PC-9 (cell line): ENCODE measurements at regions of chr4 and their contacts with region 1.

Region 1: GRCh38 chr4:86497980-86498862 is 95.9 kb upstream of the PTPN13 start:
- DNase-seq: peak in 1 of 2 experiments; percentile 58
- H3K4me3 ChIP-seq: no peak overlapping the region
- H3K27ac ChIP-seq: no peak overlapping the region
- H3K4me1 ChIP-seq: peaks cover 40% of the 10 kb centered on the region
- H3K27me3 ChIP-seq: no peaks in the 10 kb centered on the region
- CTCF ChIP-seq: peak; percentile 79

Region 2: GRCh38 chr4:85979276-85979675 is 518.9 kb before region 1 on chr4:
- CTCF ChIA-PET with region 1: no interaction called
- POLR2A ChIA-PET with region 1: no interaction called
- intact Hi-C with region 1: no loop called
- DNase-seq: no peak
- H3K4me3 ChIP-seq: no peak overlapping the region
- H3K27ac ChIP-seq: no peak overlapping the region
- H3K4me1 ChIP-seq: no peaks in the 10 kb centered on the region
- H3K27me3 ChIP-seq: no peaks in the 10 kb centered on the region
- CTCF ChIP-seq: no peak

Region 3: DNA sequence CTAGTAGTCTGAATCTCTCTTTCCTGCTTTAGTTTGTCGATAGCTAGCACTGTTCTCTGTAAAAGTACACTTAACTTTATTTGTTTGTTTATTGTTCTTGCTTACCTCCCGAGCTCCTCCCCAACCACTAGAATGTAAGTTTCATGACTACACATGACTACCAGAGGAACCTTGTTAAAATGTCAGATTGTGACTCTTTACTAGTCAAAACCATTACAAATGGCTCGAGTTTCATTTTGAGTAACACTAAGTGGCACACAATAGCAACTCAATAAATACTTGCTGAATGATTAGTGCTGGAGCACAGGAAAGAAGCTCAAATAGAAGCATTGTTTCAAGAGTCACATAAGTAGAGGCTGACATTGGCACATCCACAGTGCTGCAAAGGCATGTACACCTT is 254.5 kb before region 1 on chr4:
- CTCF ChIA-PET with region 1: interaction called, 12 read pairs
- POLR2A ChIA-PET with region 1: no interaction called
- intact Hi-C with region 1: no loop called
- DNase-seq: no peak
- H3K4me3 ChIP-seq: no peak overlapping the region
- H3K27ac ChIP-seq: no peak overlapping the region
- H3K4me1 ChIP-seq: no peaks in the 10 kb centered on the region
- H3K27me3 ChIP-seq: no peaks in the 10 kb centered on the region
- CTCF ChIP-seq: no peak

Region 4: GRCh38 chr4:86294883-86295282 is 203.3 kb before region 1 on chr4:
- CTCF ChIA-PET with region 1: no interaction called
- POLR2A ChIA-PET with region 1: no interaction called
- intact Hi-C with region 1: no loop called
- DNase-seq: no peak
- H3K4me3 ChIP-seq: no peak overlapping the region
- H3K27ac ChIP-seq: no peak overlapping the region
- H3K4me1 ChIP-seq: no peaks in the 10 kb centered on the region
- H3K27me3 ChIP-seq: no peaks in the 10 kb centered on the region
- CTCF ChIP-seq: no peak

Region 5: GRCh38 chr4:86338989-86339388 is 159.2 kb before region 1 on chr4:
- CTCF ChIA-PET with region 1: no interaction called
- POLR2A ChIA-PET with region 1: no interaction called
- intact Hi-C with region 1: loop called (anchors 1 kb)
- DNase-seq: peak; percentile 47 to 80
- H3K4me3 ChIP-seq: no peak overlapping the region
- H3K27ac ChIP-seq: peak overlapping the region; percentile 66
- H3K4me1 ChIP-seq: peaks cover 12% of the 10 kb centered on the region
- H3K27me3 ChIP-seq: no peaks in the 10 kb centered on the region
- CTCF ChIP-seq: no peak

Region 6: GRCh38 chr4:87235020-87235671 is 736.9 kb after region 1 on chr4:
- CTCF ChIA-PET with region 1: no interaction called
- POLR2A ChIA-PET with region 1: no interaction called
- intact Hi-C with region 1: loop called (anchors 5 kb)
- DNase-seq: no peak
- H3K4me3 ChIP-seq: peak overlapping the region; percentile 75; the same call in 1 of the 2 replicates
- H3K27ac ChIP-seq: no peak overlapping the region
- H3K4me1 ChIP-seq: peaks cover 5% of the 10 kb centered on the region
- H3K27me3 ChIP-seq: no peaks in the 10 kb centered on the region
- CTCF ChIP-seq: no peak

Region 7: DNA sequence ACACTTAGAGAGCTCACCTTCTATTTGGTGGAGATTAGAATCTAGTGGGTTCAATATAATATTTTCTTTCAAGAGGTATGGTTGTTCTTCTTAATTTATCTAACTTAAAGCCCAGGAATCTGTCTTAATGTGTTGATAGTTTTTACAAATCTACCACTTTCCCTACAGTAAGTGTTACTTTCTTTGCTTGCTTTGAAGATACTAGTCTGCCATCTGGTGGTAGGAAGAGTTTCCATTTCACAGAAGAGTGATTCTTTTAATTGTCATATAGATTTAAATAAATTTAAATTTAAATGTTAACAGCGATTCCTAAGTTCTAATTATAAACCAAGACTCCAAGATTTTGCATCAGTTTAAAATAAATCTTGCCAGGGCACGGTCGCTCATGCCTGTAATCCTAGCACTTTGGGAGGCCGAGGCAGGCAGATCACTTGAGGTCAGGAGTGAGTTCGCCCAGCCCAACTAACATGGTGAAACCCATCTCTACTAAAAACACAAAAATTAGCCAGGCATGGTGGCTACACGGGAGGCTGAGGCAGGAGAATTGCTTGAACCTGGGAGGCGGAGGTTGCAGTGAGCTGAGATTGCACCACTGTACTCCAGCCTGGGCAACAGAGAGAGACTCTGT is 967.6 kb after region 1 on chr4:
- CTCF ChIA-PET with region 1: no interaction called
- POLR2A ChIA-PET with region 1: no interaction called
- intact Hi-C with region 1: loop called (anchors 5 kb)
- DNase-seq: no peak
- H3K4me3 ChIP-seq: no peak overlapping the region
- H3K27ac ChIP-seq: no peak overlapping the region
- H3K4me1 ChIP-seq: 0 out of 2 replicates have a peak, but pooled peaks cover 1% of the 10 kb centered on the region
- H3K27me3 ChIP-seq: no peaks in the 10 kb centered on the region
- CTCF ChIP-seq: peak; percentile 72

Region 8: DNA sequence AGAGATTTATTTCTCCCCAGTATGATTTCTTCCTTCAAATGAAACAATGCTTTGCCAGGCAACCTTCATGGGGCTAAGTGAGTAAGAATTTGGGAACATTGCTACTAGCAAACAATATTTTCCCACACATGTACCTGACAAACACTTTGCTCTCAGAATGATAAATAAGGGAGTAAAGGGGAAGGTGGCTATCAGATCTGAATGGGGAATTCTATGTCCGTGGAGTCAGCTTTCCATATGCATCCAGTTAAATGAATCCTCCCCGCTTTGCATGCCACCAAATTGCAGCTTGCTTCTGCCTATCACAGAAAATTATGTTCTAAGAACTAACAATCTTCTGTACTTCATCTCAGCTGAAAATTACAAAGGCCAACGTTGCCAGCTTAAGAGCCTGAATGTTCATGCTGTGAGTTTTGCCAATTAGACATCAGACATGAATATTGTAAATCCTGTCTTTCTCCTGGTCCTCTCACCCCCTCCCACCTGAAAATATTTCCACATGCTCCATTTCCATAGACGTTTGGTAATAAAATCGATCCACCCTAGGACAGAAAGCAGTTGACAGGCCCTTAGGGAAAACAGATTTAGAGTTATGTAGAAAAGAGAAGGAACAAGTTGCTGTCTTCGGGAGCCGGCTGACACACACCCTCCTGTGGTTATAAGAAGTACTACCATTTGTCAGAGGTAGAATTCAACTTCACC is 1340.8 kb after region 1 on chr4:
- CTCF ChIA-PET with region 1: no interaction called
- POLR2A ChIA-PET with region 1: no interaction called
- intact Hi-C with region 1: loop called (anchors 10 kb)
- DNase-seq: no peak
- H3K4me3 ChIP-seq: no peak overlapping the region
- H3K27ac ChIP-seq: no peak overlapping the region
- H3K4me1 ChIP-seq: no peaks in the 10 kb centered on the region
- H3K27me3 ChIP-seq: no peaks in the 10 kb centered on the region
- CTCF ChIP-seq: peak; percentile 79